Vagina (tissue), 2 donors: ENCODE measurements at regions of chr10 and their contacts with region 1.

Region 1: GRCh38 chr10:77622889-77623291 is 14.7 kb downstream of the KCNMA1 start:
- DNase-seq: no peak
- H3K4me3 ChIP-seq: peak overlapping the region in 1 of 2 donors; percentile 6
- H3K27ac ChIP-seq: peak overlapping the region; percentile 29
- H3K4me1 ChIP-seq: peaks cover 12% of the 10 kb centered on the region
- H3K27me3 ChIP-seq: no peaks in the 10 kb centered on the region
- CTCF ChIP-seq: no peak
- POLR2A ChIP-seq: no peak

Region 2: DNA sequence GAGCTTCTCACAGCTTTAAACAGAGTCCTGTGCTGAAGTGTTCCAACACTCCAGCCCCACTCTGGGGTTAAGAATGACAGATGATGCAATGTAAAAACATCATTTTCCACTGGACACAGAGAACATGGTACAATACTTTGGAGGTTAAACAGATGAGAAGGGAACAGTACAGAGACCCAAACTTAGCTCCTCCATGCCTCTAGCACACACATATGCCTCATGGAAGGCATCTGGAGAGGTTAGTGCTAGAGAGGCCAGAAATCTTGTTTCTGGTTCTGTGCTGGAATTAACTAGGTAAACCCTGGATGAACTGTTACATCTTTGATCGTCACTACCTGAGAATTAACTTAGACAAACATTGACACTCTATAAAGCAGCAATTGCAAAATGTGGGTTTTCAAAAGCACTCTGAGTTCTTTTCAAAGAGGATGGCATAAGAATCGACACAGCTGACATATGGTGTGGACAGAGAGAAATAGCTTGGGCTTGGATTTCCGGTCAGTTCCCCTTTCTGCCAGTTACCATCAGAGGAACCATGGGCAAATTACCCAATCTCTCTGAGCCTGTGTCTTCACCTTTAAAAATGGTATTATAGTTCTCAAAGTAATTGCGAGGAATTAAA is 67.2 kb before region 1 on chr10:
- intact Hi-C with region 1: loop called (anchors 10 kb)
- DNase-seq: no peak
- H3K4me3 ChIP-seq: no peak overlapping the region
- H3K27ac ChIP-seq: peak overlapping the region; percentile 47
- H3K4me1 ChIP-seq: peaks cover 15% of the 10 kb centered on the region
- H3K27me3 ChIP-seq: no peaks in the 10 kb centered on the region
- CTCF ChIP-seq: no peak
- POLR2A ChIP-seq: no peak